ENCODE measurements at regions of chr18 and their contacts with region 1.

Region 1: DNA sequence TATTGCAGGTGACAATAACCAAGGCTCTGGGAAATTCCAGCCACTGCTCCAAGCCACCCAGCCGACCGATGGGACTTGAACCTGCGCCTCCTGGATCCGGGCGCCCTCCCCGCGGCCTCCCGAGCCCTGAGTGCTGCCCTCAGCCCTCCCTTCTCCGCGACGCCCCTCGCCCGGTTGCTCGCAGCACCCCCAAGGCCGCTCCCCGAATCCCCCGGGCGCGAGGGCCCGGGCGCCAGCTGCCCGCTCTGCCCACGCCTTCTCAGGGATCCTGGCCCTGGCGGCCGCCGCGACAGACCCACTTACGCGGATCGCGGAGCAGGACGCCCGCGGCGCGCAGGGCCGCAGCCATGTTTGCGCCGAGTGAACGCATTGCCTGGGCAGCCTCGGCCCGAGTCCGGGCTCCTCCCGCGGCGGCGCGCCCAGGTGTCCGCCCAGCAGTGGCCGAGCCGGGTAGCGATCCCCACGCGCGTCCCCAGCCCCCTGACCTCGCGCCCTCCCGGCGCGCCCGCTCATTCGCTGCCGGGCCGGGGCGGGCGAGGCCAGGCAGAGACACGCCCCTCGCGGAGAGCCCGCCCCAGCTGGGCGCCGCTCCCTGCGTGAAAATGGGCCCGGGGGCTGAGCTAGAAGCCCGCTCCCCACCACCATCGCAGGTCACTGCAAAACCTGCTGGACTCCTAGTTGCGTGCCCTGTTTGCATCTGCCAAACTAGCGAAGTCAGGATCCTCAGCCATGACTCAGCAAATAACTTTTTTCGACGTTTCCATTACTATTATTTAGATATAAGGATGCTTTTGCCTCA is at the start of gene FECH:
- DNase-seq: peak; percentile 85 to 89
- ATAC-seq: peak; percentile 97 to 99 (median 98)
- H3K4me3 ChIP-seq: peak within 1 kb of the TSS; percentile 65 to 97 (median 80)
- H3K27ac ChIP-seq: peak within 1 kb of the TSS; percentile 30 to 93 (median 86)
- H3K4me1 ChIP-seq: peaks cover 8 to 26% (median 15%) of the 10 kb centered on the region in 9 donors
- H3K27me3 ChIP-seq: no peaks in the 10 kb centered on the region
- CTCF ChIP-seq: peak in 4 of 9 donors; percentile 5 to 35 (median 10)
- total RNA-seq, gene FECH: 30.7 to 55.7 (median 40.5) TPM

Region 2: DNA sequence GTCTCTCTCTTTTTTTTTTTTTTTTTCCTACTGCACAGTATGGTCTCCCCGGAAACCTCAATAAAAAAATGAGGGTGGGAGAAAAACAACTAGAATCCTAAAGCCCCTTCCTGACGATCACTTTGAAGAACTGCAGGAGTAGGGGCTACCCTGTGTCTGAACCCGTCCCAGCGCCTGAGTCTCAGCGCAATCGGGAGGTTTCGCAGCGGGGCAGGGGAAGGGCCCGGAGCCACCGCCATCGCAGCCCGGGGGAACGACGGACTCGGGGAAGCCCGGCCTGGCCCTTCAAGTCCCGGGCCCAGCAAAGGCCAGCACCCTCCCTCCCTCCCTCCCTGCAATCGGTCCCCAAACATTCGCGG is 34.8 kb after region 1 on chr18:
- intact Hi-C with region 1: loop called in 1 of 10 experiments (anchors 5 kb)
- DNase-seq: no peak
- ATAC-seq: peak; percentile 10 to 66 (median 46)
- H3K4me3 ChIP-seq: peak overlapping the region; percentile 71 to 89 (median 80)
- H3K27ac ChIP-seq: peak overlapping the region; percentile 72 to 95 (median 90)
- H3K4me1 ChIP-seq: peaks cover 0 to 37% (median 19%) of the 10 kb centered on the region in 9 donors
- H3K27me3 ChIP-seq: no peaks in the 10 kb centered on the region
- CTCF ChIP-seq: no peak

Region 3: DNA sequence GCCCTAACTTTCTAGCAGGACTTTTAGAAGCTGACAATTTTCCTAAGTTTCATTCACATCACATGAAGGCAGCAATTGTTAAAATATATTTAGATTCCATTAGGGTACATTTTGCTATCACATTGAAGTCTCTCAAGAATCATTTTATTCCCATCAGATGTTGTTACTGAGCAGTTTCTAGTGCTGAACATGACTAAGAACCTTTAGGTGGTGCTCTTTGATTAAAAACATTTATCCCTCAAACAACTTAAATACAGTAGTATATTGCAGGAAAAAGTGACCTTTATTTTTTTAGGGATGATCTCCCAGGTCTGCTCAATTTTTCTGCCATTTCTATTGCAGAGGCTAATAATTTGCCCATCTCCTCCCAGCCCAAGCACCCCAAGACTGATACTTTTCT is 58.1 kb after region 1 on chr18:
- intact Hi-C with region 1: no loop called
- DNase-seq: no peak
- ATAC-seq: no peak
- H3K4me3 ChIP-seq: no peak overlapping the region
- H3K27ac ChIP-seq: no peak overlapping the region
- H3K4me1 ChIP-seq: peaks cover 0 to 6% (median 0%) of the 10 kb centered on the region in 9 donors
- H3K27me3 ChIP-seq: no peaks in the 10 kb centered on the region
- CTCF ChIP-seq: peak in 7 of 9 donors; percentile 19 to 54 (median 24)